Ovary (tissue), 10 donors: ENCODE measurements at regions of chr1 and their contacts with region 1.

Region 1: DNA sequence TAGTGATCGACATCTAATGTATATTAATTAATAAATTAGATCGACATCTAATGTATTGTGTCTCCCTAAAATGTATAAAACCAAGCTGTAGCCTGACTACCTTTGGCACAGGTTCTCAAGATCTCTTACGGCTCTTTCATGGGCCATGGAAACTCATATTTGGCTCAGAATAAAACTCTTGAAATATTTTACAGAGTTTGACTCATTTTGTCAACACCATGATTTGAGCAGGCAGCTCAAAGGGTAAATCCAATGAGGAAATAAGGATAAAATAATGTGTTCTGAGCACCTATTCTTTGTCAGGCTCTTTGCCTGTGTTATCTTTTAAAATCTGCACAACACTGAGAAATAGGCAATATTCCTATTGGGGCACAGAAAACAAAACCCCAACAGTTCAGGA is 223.4 kb upstream of the DUSP10 start:
- DNase-seq: no peak
- H3K4me3 ChIP-seq: no peak overlapping the region
- H3K27ac ChIP-seq: no peak overlapping the region
- H3K4me1 ChIP-seq: peaks cover 2% of the 10 kb centered on the region
- H3K27me3 ChIP-seq: no peaks in the 10 kb centered on the region
- CTCF ChIP-seq: no peak
- EP300 ChIP-seq: no peak
- POLR2A ChIP-seq: no peak

Region 2: GRCh38 chr1:221998186-221998612 is 32.9 kb after region 1 on chr1:
- intact Hi-C with region 1: loop called in 1 of 4 experiments (anchors 1 kb)
- DNase-seq: no peak
- H3K4me3 ChIP-seq: no peak overlapping the region
- H3K27ac ChIP-seq: no peak overlapping the region
- H3K4me1 ChIP-seq: peaks cover 1% of the 10 kb centered on the region
- H3K27me3 ChIP-seq: no peaks in the 10 kb centered on the region
- CTCF ChIP-seq: no peak
- EP300 ChIP-seq: no peak
- POLR2A ChIP-seq: no peak

Region 3: GRCh38 chr1:222171005-222171404 is 205.8 kb after region 1 on chr1:
- intact Hi-C with region 1: no loop called
- DNase-seq: no peak
- H3K4me3 ChIP-seq: no peak overlapping the region
- H3K27ac ChIP-seq: no peak overlapping the region
- H3K4me1 ChIP-seq: no peaks in the 10 kb centered on the region
- H3K27me3 ChIP-seq: no peaks in the 10 kb centered on the region
- CTCF ChIP-seq: no peak
- EP300 ChIP-seq: no peak
- POLR2A ChIP-seq: no peak